WTC11 (cell line): ENCODE measurements at regions of chr17 and their contacts with region 1.

Region 1: GRCh38 chr17:63919311-63919723 is 678 bp upstream of the GH1 start:
- DNase-seq: peak; percentile 81
- ATAC-seq: peak; percentile 95
- H3K4me3 Mint-ChIP-seq: peak overlapping the region; percentile 46; the same call in 1 of the 2 replicates
- H3K27ac Mint-ChIP-seq: no peak overlapping the region
- H3K4me1 Mint-ChIP-seq: peaks cover 16% of the 10 kb centered on the region
- H3K27me3 Mint-ChIP-seq: peaks cover 3% of the 10 kb centered on the region; the same call in 1 of the 2 replicates
- CTCF ChIP-seq: peak; percentile 97

Region 2: GRCh38 chr17:63876855-63877254 is 42.5 kb before region 1 on chr17:
- CTCF ChIA-PET with region 1: interaction called, 44 read pairs
- POLR2A ChIA-PET with region 1: no interaction called
- DNase-seq: no peak
- ATAC-seq: no peak
- H3K4me3 Mint-ChIP-seq: no peak overlapping the region
- H3K27ac Mint-ChIP-seq: no peak overlapping the region
- H3K4me1 Mint-ChIP-seq: peaks cover 16% of the 10 kb centered on the region
- H3K27me3 Mint-ChIP-seq: peaks cover 4% of the 10 kb centered on the region; the same call in 1 of the 2 replicates
- CTCF ChIP-seq: no peak

Region 3: DNA sequence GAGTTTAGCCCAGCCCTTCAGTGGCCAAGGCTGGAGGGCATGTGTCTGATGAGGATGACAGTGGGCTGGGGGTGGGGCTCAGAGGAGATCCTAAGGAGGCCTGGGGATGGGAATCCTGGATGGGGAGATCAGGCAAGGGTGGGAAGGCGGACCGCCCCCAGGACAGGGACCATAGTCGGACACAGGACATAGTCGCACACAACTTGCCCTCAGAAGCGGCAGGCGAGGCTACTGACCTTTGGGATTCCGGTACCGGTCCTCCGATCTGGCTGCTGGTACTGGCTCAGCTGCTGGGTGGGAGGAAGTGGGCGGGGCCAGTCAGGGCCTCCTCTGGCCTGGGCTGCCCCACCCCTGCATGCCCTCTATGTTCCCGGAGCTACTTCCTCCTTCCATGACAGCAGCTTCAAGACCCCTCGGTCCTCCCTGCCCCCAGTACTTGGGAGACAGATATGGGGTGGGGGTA is 11.8 kb after region 1 on chr17:
- CTCF ChIA-PET with region 1: interaction called, 87 read pairs
- POLR2A ChIA-PET with region 1: interaction called, 3 read pairs
- DNase-seq: peak; percentile 58
- ATAC-seq: peak; percentile 86
- H3K4me3 Mint-ChIP-seq: no peak overlapping the region
- H3K27ac Mint-ChIP-seq: no peak overlapping the region
- H3K4me1 Mint-ChIP-seq: peaks cover 18% of the 10 kb centered on the region
- H3K27me3 Mint-ChIP-seq: no peaks in the 10 kb centered on the region; the same call in 1 of the 2 replicates
- CTCF ChIP-seq: no peak

Region 4: GRCh38 chr17:63961355-63962212 is 42.3 kb after region 1 on chr17:
- CTCF ChIA-PET with region 1: interaction called, 147 read pairs
- POLR2A ChIA-PET with region 1: interaction called, 9 read pairs
- DNase-seq: peak; percentile 100
- ATAC-seq: peak; percentile 90
- H3K4me3 Mint-ChIP-seq: peak overlapping the region; percentile 76
- H3K27ac Mint-ChIP-seq: 0 out of 2 replicates have a peak overlapping the region, but pooled peaks have one; percentile 70
- H3K4me1 Mint-ChIP-seq: peaks cover 20% of the 10 kb centered on the region
- H3K27me3 Mint-ChIP-seq: no peaks in the 10 kb centered on the region; the same call in 1 of the 2 replicates
- CTCF ChIP-seq: no peak

Region 5: GRCh38 chr17:63998050-63998720 is 78.9 kb after region 1 on chr17 and contains the start of gene PRR29:
- CTCF ChIA-PET with region 1: interaction called, 46 read pairs
- POLR2A ChIA-PET with region 1: no interaction called
- DNase-seq: peak; percentile 82
- ATAC-seq: peak; percentile 78
- H3K4me3 Mint-ChIP-seq: peak within 1 kb of the TSS; percentile 86
- H3K27ac Mint-ChIP-seq: no peak within 1 kb of the TSS
- H3K4me1 Mint-ChIP-seq: peaks cover 16% of the 10 kb centered on the region
- H3K27me3 Mint-ChIP-seq: peaks cover 40% of the 10 kb centered on the region
- CTCF ChIP-seq: no peak
- total RNA-seq, gene PRR29: 0.64 to 1.1 TPM (median 0.85 TPM) in 3 replicates

Region 6: GRCh38 chr17:64129764-64130558 is 210.6 kb after region 1 on chr17 and contains the start of gene ERN1:
- CTCF ChIA-PET with region 1: interaction called, 47 read pairs
- POLR2A ChIA-PET with region 1: no interaction called
- DNase-seq: peak; percentile 89
- ATAC-seq: peak; percentile 89
- H3K4me3 Mint-ChIP-seq: peak within 1 kb of the TSS; percentile 66
- H3K27ac Mint-ChIP-seq: no peak within 1 kb of the TSS
- H3K4me1 Mint-ChIP-seq: peaks cover 13% of the 10 kb centered on the region
- H3K27me3 Mint-ChIP-seq: peaks cover 37% of the 10 kb centered on the region
- CTCF ChIP-seq: no peak
- total RNA-seq, gene ERN1: 6.5 to 8.6 TPM (median 7.6 TPM) in 3 replicates